Activated T-helper 2 cell treated with anti-CD3 and anti-CD28 coated beads, Interferon-gamma antibody, Interleukin-2, Interleukin-4, amounts not matched to agents 10 μg/mL and 5 μg/mL and 100 μg/mL, durations not matched to agents 14 hours and 24 hours and 36 hours (primary cell): ENCODE measurements at regions of chr6 and their contacts with region 1.

Region 1: DNA sequence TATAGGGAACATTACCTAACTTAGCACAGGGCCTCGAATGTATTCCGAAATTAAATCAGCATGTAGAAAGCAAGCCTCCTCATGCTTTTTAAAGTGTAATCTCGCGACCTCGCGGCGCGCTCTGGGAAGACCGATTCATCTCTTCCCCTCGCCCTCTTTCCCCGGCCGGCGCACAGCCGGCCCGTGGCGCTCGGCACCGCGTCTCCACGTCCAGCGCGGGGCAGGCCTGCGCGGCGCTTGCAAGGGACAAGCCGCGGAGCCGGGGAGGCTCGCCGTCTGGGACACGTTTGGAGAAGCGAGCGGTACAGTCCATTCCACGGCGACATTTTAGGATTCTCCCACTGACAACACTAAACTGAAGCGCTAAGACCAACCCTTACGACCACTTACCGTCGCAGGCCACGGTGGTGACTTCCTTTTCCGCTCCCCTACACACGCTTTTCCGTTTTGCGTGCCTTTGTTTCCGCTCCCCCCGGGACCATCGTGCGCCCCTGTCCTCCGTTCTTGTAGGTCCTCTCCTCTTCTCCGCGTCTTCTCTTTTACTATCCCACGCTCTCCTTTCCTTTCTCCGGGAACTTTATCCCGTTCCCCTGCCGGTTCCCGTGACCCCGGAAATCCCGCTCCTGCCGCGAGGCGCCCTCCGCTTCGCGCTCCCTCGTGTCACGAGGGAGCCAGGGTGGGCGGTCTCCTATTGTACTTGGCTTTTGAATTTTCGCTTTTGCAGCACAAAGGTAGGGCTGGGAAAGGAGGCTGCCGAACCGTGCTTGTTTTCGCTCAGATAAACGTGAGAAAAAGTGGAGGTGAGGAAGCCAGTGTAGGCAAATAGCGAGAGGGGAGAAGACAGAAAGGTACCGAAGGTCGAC is at the start of gene ECHDC1:
- DNase-seq: peak; percentile 65
- H3K4me3 Mint-ChIP-seq: no peak within 1 kb of the TSS
- H3K27ac Mint-ChIP-seq: no peak within 1 kb of the TSS
- H3K4me1 Mint-ChIP-seq: peaks cover 19% of the 10 kb centered on the region
- H3K27me3 Mint-ChIP-seq: no peaks in the 10 kb centered on the region
- total RNA-seq, gene ECHDC1: 60.9 and 61.6 TPM in 2 replicates

Region 2: DNA sequence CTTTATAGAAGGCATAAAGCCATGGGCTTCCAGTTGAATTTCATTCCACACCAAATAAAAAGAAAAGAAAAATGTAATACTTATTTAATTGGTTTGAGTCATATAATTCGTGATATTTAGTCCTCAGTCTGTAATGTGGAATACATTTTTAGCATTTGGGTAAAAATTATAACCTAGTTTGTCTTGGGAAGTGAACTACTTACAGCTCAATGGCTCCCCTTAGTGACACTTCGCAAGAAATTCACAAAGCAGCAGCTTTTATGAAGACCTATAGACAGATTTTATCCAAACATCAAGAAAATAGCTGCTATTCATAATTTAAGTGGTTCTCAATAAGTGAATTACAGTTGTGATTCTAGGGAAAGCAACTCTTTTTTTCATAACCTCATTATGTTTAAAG is 152.6 kb before region 1 on chr6:
- intact Hi-C with region 1: no loop called
- DNase-seq: no peak
- H3K4me3 Mint-ChIP-seq: no peak overlapping the region
- H3K27ac Mint-ChIP-seq: no peak overlapping the region
- H3K4me1 Mint-ChIP-seq: no peaks in the 10 kb centered on the region
- H3K27me3 Mint-ChIP-seq: peaks cover 9% of the 10 kb centered on the region

Region 3: DNA sequence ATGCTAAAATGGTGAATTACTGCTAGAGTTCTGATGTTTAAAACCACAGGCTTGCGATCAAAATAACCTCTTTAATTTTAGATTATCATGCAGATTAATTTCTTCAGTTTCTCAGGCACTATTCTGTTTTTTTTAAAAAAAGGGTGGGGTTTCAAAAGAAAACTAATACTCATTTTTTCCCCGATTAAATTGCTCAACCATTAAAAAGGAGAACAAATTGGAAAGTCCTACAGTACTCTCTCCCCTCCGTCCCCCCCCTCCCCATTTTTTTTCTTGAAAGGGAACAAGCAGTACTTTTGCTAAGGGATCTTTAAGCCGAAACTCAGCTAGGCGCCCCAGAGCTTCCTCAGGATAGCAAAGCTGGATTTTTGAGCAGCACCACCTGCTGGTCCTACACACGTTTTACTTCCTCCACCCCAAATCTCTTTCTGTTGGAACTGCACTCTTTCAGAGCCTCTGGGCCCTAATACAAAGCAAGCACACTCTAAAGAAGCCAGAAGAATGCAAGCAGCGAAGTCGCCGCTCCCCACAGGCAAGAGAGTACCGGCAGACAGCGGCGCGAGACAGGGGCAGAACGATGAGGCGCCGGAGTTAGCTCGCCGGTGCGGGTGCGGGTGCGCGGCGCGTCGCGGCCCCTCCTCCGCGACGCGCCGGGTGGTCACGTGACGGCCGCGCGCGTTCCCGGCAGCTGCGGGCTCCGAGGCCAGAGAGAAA is 76.8 kb before region 1 on chr6 and contains the start of gene RNF146:
- intact Hi-C with region 1: loop called (anchors 2 kb)
- DNase-seq: peak; percentile 69
- H3K4me3 Mint-ChIP-seq: peak within 1 kb of the TSS; percentile 97
- H3K27ac Mint-ChIP-seq: peak within 1 kb of the TSS; percentile 99
- H3K4me1 Mint-ChIP-seq: peaks cover 28% of the 10 kb centered on the region
- H3K27me3 Mint-ChIP-seq: peaks cover 16% of the 10 kb centered on the region
- total RNA-seq, gene RNF146: 18.7 and 19.1 TPM in 2 replicates

Region 4: GRCh38 chr6:127420556-127420955 is 77.4 kb after region 1 on chr6:
- intact Hi-C with region 1: loop called (anchors 1 kb)
- DNase-seq: peak; percentile 74
- H3K4me3 Mint-ChIP-seq: no peak overlapping the region
- H3K27ac Mint-ChIP-seq: peak overlapping the region; percentile 60
- H3K4me1 Mint-ChIP-seq: peaks cover 16% of the 10 kb centered on the region
- H3K27me3 Mint-ChIP-seq: no peaks in the 10 kb centered on the region

Region 5: DNA sequence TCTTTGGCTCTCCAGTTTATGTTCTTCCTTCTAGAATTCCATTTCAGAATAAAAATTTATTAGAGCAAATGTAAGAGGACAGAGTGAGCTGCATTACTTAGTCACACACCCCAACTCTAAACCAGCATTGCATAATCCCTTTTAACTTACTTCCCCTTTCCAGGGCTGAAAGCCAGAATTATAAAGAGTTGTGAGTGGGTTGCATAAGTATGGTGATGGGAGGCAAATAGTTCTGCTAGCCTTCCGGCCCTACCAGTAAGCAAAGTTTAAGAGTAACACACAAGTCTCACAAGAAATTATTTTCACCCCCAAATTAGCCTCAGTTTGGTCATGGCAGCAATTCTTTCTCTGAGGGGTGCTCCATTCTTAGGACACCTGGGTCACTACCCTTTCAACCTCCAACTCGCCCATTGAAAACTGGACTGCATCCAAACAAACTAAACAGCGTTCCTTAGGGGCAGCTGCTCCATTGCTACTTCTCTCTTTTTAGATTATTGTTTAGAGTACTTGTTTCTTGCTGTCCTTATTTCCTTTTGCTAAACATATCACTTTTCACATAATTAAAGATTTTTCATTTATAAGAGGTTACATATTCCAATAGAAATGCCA is 114.4 kb after region 1 on chr6:
- intact Hi-C with region 1: loop called (anchors 2 kb)
- DNase-seq: no peak
- H3K4me3 Mint-ChIP-seq: no peak overlapping the region
- H3K27ac Mint-ChIP-seq: no peak overlapping the region
- H3K4me1 Mint-ChIP-seq: peaks cover 61% of the 10 kb centered on the region
- H3K27me3 Mint-ChIP-seq: peaks cover 1% of the 10 kb centered on the region

Region 6: DNA sequence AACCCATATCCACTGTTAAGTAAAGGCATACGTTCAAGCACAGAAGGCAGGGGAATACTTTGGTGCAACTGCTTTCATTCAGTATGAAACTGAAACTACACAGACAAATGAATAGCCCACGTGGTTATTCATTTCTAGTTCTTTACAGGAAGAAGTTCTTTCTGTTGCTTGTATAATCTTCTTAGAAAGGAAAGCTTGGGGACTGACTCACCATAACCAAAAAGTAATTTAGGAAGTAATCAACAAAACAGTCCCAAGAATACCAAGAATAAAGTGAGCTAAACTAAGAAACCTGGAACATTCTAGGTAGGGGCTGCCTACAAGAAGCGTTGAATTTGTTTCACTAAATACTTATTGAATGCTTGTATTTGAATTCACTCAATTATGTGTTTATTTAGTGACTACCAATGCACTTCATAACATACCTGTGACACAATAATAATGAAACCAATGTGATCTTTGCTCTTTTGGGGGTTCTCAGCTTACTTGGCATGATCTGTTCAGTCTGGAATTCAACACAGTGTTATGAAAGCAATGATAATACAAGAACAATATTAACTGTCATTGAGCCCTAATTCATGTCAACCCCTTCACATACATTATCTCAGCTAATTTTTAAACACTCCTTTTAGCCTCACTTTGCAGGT is 141.2 kb after region 1 on chr6:
- intact Hi-C with region 1: loop called (anchors 1 kb)
- DNase-seq: no peak
- H3K4me3 Mint-ChIP-seq: peak overlapping the region; percentile 66
- H3K27ac Mint-ChIP-seq: peak overlapping the region; percentile 65
- H3K4me1 Mint-ChIP-seq: peaks cover 42% of the 10 kb centered on the region
- H3K27me3 Mint-ChIP-seq: no peaks in the 10 kb centered on the region